ENCODE measurements at regions of chr4 and their contacts with region 1.

Region 1: GRCh38 chr4:185039508-185040273 is 21.4 kb downstream of the HELT start:
- DNase-seq: no peak
- ATAC-seq: peak; percentile 59

Region 2: GRCh38 chr4:185096032-185096653 is 56.5 kb after region 1 on chr4:
- intact Hi-C with region 1: loop called (anchors 2 kb)
- DNase-seq: no peak
- ATAC-seq: no peak

Region 3: DNA sequence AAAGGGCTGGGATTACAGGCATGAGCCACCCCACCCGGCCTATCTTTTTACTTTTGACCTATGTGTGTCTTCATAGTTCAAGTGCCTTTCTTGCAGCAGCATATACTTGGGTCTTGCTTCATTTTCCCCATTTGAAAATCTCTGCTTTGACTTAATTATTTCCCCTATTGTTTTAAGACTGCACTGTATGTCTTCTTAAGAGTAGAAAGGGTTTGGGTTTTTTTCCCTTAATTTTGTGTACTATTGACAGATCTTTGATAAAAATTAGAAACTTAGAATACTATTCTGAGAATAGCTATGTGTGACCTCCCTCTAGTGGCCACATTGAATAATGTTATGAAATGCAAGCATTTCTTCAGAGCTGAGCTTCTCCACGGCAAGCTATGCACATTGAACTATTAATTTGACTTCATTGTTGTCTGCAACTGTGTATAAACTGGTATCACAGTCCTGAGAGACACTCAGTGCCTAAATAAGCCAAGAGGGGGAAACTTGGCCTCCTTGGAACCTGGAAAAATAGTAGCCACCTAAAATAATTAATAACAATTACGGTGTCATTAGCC is 94.7 kb after region 1 on chr4:
- intact Hi-C with region 1: loop called (anchors 1 kb)
- DNase-seq: no peak
- ATAC-seq: peak; percentile 42

Region 4: DNA sequence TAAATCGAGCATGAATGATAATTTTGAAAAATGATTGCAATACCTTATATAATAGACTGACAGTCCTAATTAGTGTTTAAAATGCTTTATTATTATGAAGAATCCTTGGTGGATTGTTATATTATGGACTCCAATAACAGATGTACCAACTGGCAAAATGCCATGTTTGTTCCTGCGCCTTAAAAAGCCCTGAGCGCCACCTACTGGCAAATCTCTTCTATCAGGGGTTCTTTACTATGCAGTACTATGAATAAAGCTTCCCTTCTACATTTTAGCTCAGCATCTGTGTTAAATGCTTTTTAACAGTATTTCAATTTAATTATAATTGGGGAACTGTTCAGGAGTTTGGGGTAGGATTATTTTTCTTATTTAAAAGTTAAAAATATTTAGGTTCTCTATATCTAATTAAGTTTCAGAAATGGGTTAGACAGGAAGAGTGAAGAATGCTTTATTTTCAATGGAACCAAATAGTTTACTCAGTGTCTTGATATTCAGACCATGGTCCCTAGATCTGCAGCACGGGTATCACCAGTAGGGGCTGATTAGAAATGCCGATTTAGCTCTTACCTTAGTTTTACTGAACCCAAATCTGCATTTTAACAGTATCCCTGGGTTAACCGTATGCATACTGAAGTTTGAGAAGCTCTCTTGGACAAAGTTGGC is 144.1 kb after region 1 on chr4:
- intact Hi-C with region 1: loop called (anchors 2 kb)
- DNase-seq: no peak
- ATAC-seq: peak; percentile 72